ENCODE measurements at regions of chr10 and their contacts with region 1.

Region 1: DNA sequence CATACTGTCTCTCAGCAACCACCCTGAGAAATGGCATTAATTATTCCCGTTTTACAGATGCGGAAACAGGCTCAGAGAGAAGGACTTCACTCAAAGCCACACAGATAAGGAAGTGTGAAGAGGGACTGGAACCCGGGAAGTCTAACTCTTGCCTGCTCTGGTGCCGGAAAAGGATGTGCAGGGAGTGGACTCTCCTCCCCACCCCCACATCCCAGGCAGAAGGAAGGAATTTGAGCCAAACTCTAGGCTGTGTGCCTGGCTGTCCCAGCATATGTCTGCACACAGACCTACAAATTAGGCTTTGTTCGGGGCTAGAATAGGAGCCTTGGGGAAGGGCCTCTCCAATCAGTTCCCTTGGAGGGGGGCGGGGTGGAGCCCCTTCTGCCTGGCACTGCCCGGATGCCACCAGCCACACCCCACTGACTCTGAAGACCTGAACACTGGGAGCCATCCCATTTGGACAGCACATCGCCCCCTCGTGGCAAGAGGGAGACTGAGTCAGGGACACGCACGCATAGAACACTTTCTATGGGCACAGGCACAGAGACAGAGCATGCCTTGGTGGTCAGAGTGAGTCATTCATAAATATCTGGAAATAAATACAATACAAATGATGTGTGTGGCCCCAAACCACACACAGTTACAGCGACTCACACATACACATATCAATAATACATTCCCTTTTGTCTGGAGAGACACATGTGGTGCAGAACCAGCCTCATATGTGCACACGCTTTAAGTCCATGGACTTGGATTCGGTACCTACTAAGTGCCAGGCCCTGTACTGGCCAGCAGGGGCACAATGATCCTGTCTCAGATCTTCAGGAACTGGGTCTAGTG is 13.1 kb downstream of the LZTS2 start:
- DNase-seq: peak; percentile 88
- ATAC-seq: peak; percentile 94
- H3K4me3 Mint-ChIP-seq: no peak overlapping the region
- H3K27ac Mint-ChIP-seq: no peak overlapping the region
- H3K4me1 Mint-ChIP-seq: peaks cover 16% of the 10 kb centered on the region
- H3K27me3 Mint-ChIP-seq: peaks cover 31% of the 10 kb centered on the region

Region 2: DNA sequence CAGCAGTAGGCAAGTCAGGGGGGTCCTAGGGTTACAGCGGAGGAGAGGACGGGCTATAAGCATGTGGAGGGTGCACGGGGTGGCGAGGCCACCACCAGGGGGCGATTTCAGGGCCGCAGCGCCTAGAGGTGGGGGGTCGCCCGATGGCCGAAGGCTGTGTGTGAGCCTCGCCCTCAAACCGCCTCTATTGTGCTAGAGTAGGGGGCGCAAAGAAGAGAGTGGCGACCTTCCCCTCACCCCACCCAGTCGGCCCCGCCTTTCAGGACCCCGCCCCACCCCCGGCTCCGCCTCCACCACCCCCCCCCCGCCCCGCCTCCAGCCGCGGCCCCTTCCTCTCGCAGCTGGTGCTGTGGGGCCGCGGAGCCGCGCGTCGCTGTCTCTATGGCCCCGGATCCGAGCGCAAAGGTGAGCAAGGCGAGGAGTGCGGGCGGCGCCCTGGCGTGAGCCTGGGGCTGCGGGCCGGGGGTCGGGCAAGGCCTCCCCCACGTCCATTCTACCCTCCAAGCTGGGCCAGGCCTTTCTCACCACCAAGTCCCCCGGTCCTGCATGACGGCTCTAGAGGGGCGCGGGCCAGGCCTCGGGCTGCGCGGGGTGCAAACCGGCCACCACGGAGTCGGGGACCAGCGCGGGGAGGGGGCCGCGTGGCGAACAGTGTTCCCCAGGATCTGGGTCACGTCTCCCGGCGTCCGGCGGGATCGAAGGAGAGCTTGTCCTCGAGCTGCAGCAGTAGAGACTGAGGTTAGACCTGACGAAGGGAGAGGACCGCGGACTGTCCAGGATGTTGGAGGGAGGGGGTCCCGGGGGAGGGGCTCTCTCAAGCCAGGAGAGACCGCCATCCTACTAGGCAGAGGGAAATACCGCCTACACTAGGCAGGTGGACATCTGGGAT is 43.3 kb before region 1 on chr10 and contains the start of gene SEMA4G:
- CTCF ChIA-PET with region 1: interaction called, 15 read pairs
- POLR2A ChIA-PET with region 1: no interaction called
- DNase-seq: peak; percentile 49
- ATAC-seq: peak; percentile 86
- H3K4me3 Mint-ChIP-seq: peak within 1 kb of the TSS; percentile 51
- H3K27ac Mint-ChIP-seq: no peak within 1 kb of the TSS
- H3K4me1 Mint-ChIP-seq: peaks cover 6% of the 10 kb centered on the region
- H3K27me3 Mint-ChIP-seq: peaks cover 3% of the 10 kb centered on the region
- total RNA-seq, gene SEMA4G: 0.16 to 0.40 TPM